ENCODE measurements at regions of chr6 and their contacts with region 1.

Region 1: DNA sequence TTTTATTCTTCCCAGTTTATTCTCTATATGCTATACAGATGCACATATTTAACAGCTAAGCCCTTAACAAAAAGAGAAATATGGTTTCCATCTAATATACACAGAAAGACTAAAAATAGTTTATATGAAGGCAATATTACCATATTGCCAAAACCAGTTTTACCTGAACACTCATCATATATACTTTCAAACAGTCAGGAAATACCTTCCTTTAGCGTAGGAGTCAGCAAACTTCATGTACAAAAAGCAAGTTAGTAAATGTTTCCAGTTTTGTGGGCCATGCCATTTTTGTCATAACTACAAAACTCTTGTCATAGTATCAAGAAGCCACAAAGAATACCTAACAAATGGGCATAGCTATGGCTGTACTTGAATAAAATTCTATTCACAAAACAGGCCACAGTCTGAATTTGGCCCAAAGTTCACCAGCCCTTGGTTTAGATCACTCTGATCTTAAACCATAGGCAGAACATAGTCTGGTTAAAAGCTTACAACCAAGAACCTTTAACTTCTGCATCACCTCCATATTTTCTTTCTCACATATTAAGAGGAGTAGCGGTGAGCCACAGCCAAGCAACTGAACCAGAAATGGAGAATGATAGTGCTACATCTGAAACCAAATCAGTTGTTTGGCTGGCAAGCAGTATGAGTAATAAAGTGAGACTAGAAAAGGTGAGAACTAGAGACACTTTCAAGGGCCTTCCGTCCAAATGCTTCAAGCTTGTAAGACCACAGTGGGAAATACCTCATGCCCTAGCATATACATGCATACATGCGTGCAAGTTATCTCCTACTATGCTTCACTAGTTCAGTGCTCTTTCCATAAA is 116.6 kb downstream of the PTPRK start:
- DNase-seq: no peak
- ATAC-seq: no peak
- H3K4me3 Mint-ChIP-seq: no peak overlapping the region
- H3K27ac Mint-ChIP-seq: no peak overlapping the region
- H3K4me1 Mint-ChIP-seq: no peaks in the 10 kb centered on the region
- H3K27me3 Mint-ChIP-seq: no peaks in the 10 kb centered on the region
- CTCF ChIP-seq: no peak

Region 2: GRCh38 chr6:127949251-127949650 is 454.6 kb before region 1 on chr6:
- CTCF ChIA-PET with region 1: no interaction called
- POLR2A ChIA-PET with region 1: no interaction called
- intact Hi-C with region 1: no loop called
- DNase-seq: no peak
- ATAC-seq: no peak
- H3K4me3 Mint-ChIP-seq: no peak overlapping the region
- H3K27ac Mint-ChIP-seq: no peak overlapping the region
- H3K4me1 Mint-ChIP-seq: peaks cover 13% of the 10 kb centered on the region
- H3K27me3 Mint-ChIP-seq: no peaks in the 10 kb centered on the region
- CTCF ChIP-seq: no peak

Region 3: GRCh38 chr6:128452713-128453112 is 48.9 kb after region 1 on chr6:
- CTCF ChIA-PET with region 1: no interaction called
- POLR2A ChIA-PET with region 1: interaction called, 20 read pairs
- intact Hi-C with region 1: no loop called
- DNase-seq: no peak
- ATAC-seq: no peak
- H3K4me3 Mint-ChIP-seq: no peak overlapping the region
- H3K27ac Mint-ChIP-seq: no peak overlapping the region
- H3K4me1 Mint-ChIP-seq: no peaks in the 10 kb centered on the region
- H3K27me3 Mint-ChIP-seq: no peaks in the 10 kb centered on the region
- CTCF ChIP-seq: no peak

Measured in activated B cell treated with CpG ODN at 0.5 μM for 24 hours (primary cell).